Body of pancreas (tissue), 4 donors: ENCODE measurements at regions of chr11 and their contacts with region 1.

Region 1: GRCh38 chr11:1889224-1890120 is 2.2 kb downstream of the PRR33 start:
- DNase-seq: peak in 2 of 4 donors; percentile 19 to 31
- ATAC-seq: no peak
- H3K4me3 ChIP-seq: no peak overlapping the region
- H3K27ac ChIP-seq: no peak overlapping the region
- H3K4me1 ChIP-seq: peaks cover 5% of the 10 kb centered on the region
- H3K27me3 ChIP-seq: no peaks in the 10 kb centered on the region
- CTCF ChIP-seq: no peak
- POLR2A ChIP-seq: no peak

Region 2: DNA sequence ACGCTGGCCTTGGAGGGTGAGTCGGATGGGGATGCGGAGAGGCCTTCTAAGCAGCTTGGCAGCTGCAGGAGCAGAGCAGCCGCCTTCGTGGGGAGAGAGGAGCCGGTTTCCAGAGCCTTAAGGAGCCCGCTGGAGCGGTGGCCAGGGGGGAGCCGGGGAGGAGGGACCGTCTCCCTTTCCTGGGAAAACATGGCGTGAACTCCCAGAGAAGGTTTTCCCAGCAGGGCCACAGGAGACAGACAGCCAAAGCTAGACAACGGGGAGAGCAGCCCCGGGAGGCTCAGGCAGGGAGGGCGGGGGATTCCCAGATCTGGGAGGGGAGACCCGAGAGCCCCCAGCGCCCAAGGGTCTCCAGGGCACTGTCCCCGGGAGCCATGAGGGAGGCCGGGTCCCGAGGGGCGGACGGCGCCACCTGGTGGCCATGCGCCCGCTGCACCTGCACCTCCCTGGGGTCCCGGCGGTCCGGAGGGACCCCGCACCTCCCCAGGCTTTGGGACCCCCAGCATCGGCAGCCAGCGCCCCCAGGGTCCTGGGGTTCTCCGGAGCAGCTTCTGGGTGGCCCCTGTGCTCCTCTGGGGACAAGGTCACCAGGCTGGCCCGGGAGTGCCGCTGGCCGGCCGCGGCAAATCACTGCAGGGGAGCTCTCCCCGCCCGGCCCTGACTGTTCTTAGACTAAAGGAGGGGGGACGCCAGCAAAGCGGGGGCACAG is 57.1 kb before region 1 on chr11:
- intact Hi-C with region 1: no loop called
- DNase-seq: peak in 3 of 4 donors; percentile 54 to 72 (median 69)
- ATAC-seq: peak; percentile 9
- H3K4me3 ChIP-seq: no peak overlapping the region
- H3K27ac ChIP-seq: peak overlapping the region; percentile 93 to 98 (median 96)
- H3K4me1 ChIP-seq: peaks cover 73% of the 10 kb centered on the region
- H3K27me3 ChIP-seq: no peaks in the 10 kb centered on the region
- CTCF ChIP-seq: peak; percentile 77 to 99 (median 96)
- POLR2A ChIP-seq: peak in 2 of 3 donors; percentile 12 to 17

Region 3: DNA sequence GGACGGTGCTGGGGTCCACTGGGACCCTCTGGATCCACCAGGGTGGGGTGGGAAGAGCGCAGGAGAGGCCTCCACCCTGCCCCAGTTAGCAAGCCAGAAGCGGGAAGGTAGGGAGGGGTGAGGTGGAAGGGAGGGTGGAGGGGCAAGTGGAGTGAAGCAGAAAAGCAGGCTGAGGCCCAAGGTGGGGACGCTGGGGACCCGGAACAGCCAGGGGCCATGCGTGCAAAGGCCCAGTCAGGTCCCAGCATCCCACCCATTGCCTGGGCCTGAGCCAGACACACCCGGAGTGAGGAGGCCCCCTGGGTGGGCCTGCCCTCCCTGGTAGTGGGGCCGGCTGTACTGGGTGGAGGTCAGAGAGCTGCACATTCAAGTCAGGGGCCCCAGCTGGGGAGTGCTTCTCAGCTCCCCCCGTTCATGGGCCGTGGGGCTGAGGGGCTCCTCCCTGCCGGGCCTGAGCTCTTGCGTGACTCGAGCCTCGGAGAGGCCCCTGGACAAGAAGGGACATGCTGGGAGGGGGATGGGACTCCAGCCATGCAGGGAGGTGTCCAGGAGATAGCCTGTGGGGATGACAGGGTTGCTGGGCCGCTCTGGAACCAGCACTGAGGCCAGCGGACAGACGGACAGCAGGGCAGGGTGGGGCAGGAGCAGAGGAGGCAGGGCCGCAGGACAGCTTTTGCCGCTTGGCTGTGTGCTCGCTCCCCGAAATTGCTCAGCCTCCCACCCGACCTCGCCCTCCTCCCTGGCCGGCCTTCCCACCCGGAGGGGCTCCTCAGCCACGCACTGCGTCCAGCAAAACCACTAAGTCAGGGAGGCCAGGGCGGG is 37.8 kb after region 1 on chr11:
- intact Hi-C with region 1: loop called (anchors 5 kb)
- DNase-seq: no peak
- ATAC-seq: no peak
- H3K4me3 ChIP-seq: no peak overlapping the region
- H3K27ac ChIP-seq: no peak overlapping the region
- H3K4me1 ChIP-seq: no peaks in the 10 kb centered on the region
- H3K27me3 ChIP-seq: no peaks in the 10 kb centered on the region
- CTCF ChIP-seq: no peak
- POLR2A ChIP-seq: no peak

Region 4: GRCh38 chr11:2164861-2165555 is 275.5 kb after region 1 on chr11:
- intact Hi-C with region 1: loop called (anchors 5 kb)
- DNase-seq: peak in 2 of 4 donors; percentile 36 to 49
- ATAC-seq: no peak
- H3K4me3 ChIP-seq: no peak overlapping the region
- H3K27ac ChIP-seq: no peak overlapping the region
- H3K4me1 ChIP-seq: peaks cover 7% of the 10 kb centered on the region
- H3K27me3 ChIP-seq: no peaks in the 10 kb centered on the region
- CTCF ChIP-seq: no peak
- POLR2A ChIP-seq: no peak